Posterior vena cava (tissue), 2 donors: ENCODE measurements at regions of chr7 and their contacts with region 1.

Region 1: GRCh38 chr7:18526368-18526878 is 30.9 kb downstream of the HDAC9 start:
- DNase-seq: no peak

Region 2: DNA sequence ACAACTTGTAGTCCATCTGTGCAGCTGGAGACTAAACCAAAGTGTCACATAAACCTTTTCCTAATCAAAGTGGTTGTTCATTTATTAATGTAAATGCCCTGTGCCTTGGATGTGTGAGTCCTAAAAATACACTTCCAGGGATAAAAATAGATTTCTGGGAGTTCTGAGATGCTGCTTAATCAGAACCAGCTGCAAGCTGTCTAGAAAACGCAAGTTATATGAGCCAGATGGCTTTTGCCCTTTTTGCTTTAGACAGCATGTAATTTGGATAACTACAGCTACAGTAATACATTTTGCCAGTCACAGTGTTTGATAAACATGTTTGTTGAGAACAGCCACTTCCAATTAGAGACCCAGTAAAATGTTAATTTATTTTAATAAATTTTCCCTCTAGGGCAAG is 313.7 kb before region 1 on chr7:
- intact Hi-C with region 1: no loop called
- DNase-seq: no peak

Region 3: GRCh38 chr7:19958309-19958896 is 1432.0 kb after region 1 on chr7:
- intact Hi-C with region 1: loop called in 1 of 2 experiments (anchors 5 kb)
- DNase-seq: no peak